IMR-90 (cell line): ENCODE measurements at regions of chr19 and their contacts with region 1.

Region 1: DNA sequence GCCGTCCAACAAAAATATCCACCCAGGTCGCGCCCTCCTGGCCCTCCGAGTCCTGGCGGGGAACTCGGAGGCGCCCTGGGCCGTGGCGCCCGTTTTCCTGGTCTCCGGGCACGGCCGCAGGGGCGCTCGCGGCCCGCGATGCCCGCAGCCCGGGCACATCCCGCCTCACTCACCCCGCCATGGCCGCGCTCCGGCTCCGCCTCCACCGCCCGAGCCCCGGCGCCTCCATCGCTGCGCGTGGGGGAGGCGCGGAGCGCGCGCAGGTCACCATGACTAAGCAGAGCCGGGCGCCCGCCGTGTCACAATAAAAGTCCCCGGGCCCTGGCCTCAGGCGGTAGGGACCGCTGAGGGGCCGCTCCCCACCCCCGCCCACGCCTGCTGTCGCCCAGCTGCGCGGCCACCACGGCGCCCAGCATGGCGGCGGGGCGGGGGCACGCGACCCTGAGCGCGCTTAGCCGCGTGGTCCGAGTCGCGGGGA is 593 bp downstream of the KEAP1 start:
- DNase-seq: peak; percentile 85
- ATAC-seq: peak; percentile 96
- H3K4me3 ChIP-seq: peak overlapping the region; percentile 77
- H3K27ac ChIP-seq: peak overlapping the region; percentile 97
- H3K4me1 ChIP-seq: peaks cover 3% of the 10 kb centered on the region; the same call in 1 of the 2 replicates
- H3K27me3 ChIP-seq: no peaks in the 10 kb centered on the region
- CTCF ChIP-seq: peak; percentile 23; the same call in 1 of the 2 replicates
- POLR2A ChIP-seq: peak; percentile 95
- RAD21 ChIP-seq: 0 out of 2 replicates have a peak, but pooled peaks have one; percentile 3

Region 2: GRCh38 chr19:10461047-10461790 is 41.3 kb before region 1 on chr19:
- CTCF ChIA-PET with region 1: no interaction called
- POLR2A ChIA-PET with region 1: no interaction called
- dilution Hi-C with region 1: no loop called
- in situ Hi-C with region 1: no loop called
- intact Hi-C with region 1: no loop called
- DNase-seq: peak; percentile 91
- ATAC-seq: peak; percentile 99
- H3K4me3 ChIP-seq: peak overlapping the region; percentile 45
- H3K27ac ChIP-seq: no peak overlapping the region
- H3K4me1 ChIP-seq: peaks cover 3% of the 10 kb centered on the region; the same call in 1 of the 2 replicates
- H3K27me3 ChIP-seq: no peaks in the 10 kb centered on the region
- CTCF ChIP-seq: no peak
- POLR2A ChIP-seq: no peak
- RAD21 ChIP-seq: no peak

Region 3: GRCh38 chr19:10565567-10566407 is 63.2 kb after region 1 on chr19 and contains the start of gene KRI1:
- CTCF ChIA-PET with region 1: no interaction called
- POLR2A ChIA-PET with region 1: interaction called, 3 read pairs
- dilution Hi-C with region 1: no loop called
- in situ Hi-C with region 1: no loop called
- intact Hi-C with region 1: loop called (anchors 2 kb)
- DNase-seq: peak; percentile 95
- ATAC-seq: peak; percentile 76
- H3K4me3 ChIP-seq: peak within 1 kb of the TSS; percentile 61
- H3K27ac ChIP-seq: peak within 1 kb of the TSS; percentile 75
- H3K4me1 ChIP-seq: peaks cover 2% of the 10 kb centered on the region
- H3K27me3 ChIP-seq: no peaks in the 10 kb centered on the region
- CTCF ChIP-seq: peak; percentile 49
- POLR2A ChIP-seq: 0 out of 2 replicates have a peak, but pooled peaks have one; percentile 40
- RAD21 ChIP-seq: peak; percentile 14; the same call in 1 of the 2 replicates
- total RNA-seq, gene KRI1: 5.7 and 7.8 TPM in 2 replicates